PC-3 (cell line): ENCODE measurements at regions of chr3 and their contacts with region 1.

Region 1: GRCh38 chr3:21405671-21406667 is 345.0 kb downstream of the ZNF385D start:
- DNase-seq: no peak
- ATAC-seq: no peak
- H3K4me3 ChIP-seq: no peak overlapping the region
- H3K27ac ChIP-seq: no peak overlapping the region
- H3K4me1 ChIP-seq: no peaks in the 10 kb centered on the region
- H3K27me3 ChIP-seq: no peaks in the 10 kb centered on the region
- CTCF ChIP-seq: no peak

Region 2: GRCh38 chr3:22147161-22147560 is 741.2 kb after region 1 on chr3:
- CTCF ChIA-PET with region 1: no interaction called
- POLR2A ChIA-PET with region 1: interaction called, 21 read pairs
- intact Hi-C with region 1: no loop called
- DNase-seq: no peak
- ATAC-seq: no peak
- H3K4me3 ChIP-seq: no peak overlapping the region
- H3K27ac ChIP-seq: no peak overlapping the region
- H3K4me1 ChIP-seq: peaks cover 6% of the 10 kb centered on the region
- H3K27me3 ChIP-seq: no peaks in the 10 kb centered on the region
- CTCF ChIP-seq: no peak

Region 3: DNA sequence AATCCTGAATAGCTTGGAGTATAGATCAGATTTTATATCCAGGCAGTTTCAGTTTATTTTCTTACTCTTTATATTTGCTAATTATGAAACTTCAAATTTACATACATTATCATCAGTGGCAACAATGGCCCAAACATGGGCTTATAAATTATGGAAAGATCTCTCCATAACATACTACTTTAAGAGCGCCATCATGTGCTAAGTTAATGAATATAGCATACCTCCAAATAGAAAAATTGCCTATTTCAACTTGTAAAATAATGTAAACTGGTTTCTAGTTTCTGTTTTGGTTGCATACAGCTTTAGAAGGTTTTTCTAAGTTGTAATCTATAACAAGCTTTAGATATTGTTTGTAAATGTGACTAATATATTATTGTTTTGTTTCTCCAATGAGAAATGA is 1265.9 kb after region 1 on chr3:
- CTCF ChIA-PET with region 1: no interaction called
- POLR2A ChIA-PET with region 1: no interaction called
- intact Hi-C with region 1: no loop called
- DNase-seq: peak; percentile 33
- ATAC-seq: peak; percentile 35; the same call in 1 of the 2 replicates
- H3K4me3 ChIP-seq: no peak overlapping the region
- H3K27ac ChIP-seq: no peak overlapping the region
- H3K4me1 ChIP-seq: no peaks in the 10 kb centered on the region
- H3K27me3 ChIP-seq: no peaks in the 10 kb centered on the region
- CTCF ChIP-seq: peak; percentile 65